ENCODE measurements at regions of chr10 and their contacts with region 1.

Region 1: GRCh38 chr10:84293574-84294016 is 34.8 kb upstream of the CCSER2 start:
- DNase-seq: peak; percentile 54
- H3K4me3 Mint-ChIP-seq: no peak overlapping the region
- H3K27ac Mint-ChIP-seq: peak overlapping the region; percentile 45
- H3K4me1 Mint-ChIP-seq: peaks cover 25% of the 10 kb centered on the region
- H3K27me3 Mint-ChIP-seq: peaks cover 25% of the 10 kb centered on the region

Region 2: DNA sequence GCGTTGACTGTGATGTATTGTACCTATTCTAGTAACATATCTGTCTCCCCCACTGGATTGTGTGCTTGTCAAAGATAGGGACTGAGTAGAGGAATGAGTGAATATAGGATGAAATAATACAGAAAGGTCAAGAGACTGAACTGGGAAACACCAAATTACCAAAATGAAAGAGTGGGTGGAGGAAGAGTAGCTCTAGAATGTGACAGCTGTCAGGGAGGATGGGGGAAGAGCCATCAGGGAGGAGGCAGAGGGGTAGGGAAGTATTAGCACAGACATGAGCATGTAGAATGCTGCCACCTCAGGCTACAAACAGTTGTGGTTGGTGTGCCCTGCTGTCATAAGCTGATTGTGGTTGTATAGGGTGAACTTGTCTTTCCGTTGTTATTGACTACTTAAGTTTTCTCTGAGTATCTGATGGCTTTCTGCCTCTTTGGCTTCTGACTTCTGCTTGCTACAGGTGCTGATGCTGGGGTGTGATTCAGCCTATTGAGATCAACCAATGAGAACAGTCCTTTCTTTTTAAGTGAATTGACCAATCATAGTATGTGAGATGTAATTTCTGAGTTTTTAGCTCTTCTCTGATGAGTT is 40.4 kb after region 1 on chr10:
- CTCF ChIA-PET with region 1: interaction called, 10 read pairs
- POLR2A ChIA-PET with region 1: interaction called, 12 read pairs
- DNase-seq: peak; percentile 79
- H3K4me3 Mint-ChIP-seq: peak overlapping the region; percentile 55
- H3K27ac Mint-ChIP-seq: peak overlapping the region; percentile 86
- H3K4me1 Mint-ChIP-seq: peaks cover 50% of the 10 kb centered on the region
- H3K27me3 Mint-ChIP-seq: no peaks in the 10 kb centered on the region

Measured in activated CD4-positive, alpha-beta memory T cell treated with anti-CD3 and anti-CD28 coated beads, Interleukin-2, amount 10 ng/mL, durations not matched to agents 7 days and 5 days (primary cell).